ENCODE measurements at regions of chr1 and their contacts with region 1.

Region 1: DNA sequence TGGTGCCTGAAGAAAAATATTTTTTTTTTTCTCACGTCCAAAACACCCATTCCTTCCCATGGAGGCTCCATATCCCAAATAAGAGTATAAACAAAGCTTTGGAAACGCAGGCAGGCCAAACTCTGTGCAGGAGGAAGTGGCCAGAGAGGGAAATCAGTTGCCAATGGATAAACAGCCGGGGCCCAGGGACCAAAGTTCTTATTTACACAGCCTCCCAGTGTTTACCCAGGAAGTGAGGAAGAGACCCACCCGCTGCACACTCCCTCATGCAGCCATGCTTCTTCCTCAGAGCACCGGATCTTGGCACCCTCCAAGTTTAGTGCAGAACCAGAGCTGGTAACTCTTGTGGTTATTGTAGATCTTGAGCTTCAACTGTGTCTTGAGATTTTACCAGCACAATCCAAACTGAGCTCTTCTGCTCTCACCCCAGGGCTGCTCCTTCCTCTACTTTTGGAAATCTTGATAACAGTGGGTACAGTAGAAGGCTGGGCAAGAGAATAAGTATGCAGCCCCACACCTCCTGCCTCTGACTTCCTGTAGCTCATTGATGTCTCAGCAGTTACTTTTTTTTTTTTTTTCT is 14.2 kb downstream of the MARCKSL1 start:
- DNase-seq: no peak
- ATAC-seq: peak; percentile 9; the same call in 1 of the 3 replicates
- H3K4me3 ChIP-seq: no peak overlapping the region
- H3K27ac ChIP-seq: peak overlapping the region; percentile 69
- H3K4me1 ChIP-seq: peaks cover 54% of the 10 kb centered on the region
- H3K27me3 ChIP-seq: no peaks in the 10 kb centered on the region
- CTCF ChIP-seq: no peak
- EP300 ChIP-seq: no peak
- POLR2A ChIP-seq: no peak
- RAD21 ChIP-seq: no peak

Region 2: GRCh38 chr1:32221980-32222755 is 99.6 kb before region 1 on chr1 and contains the starts of genes EIF3I and TMEM234:
- CTCF ChIA-PET with region 1: interaction called, 99 read pairs
- POLR2A ChIA-PET with region 1: interaction called, 12 read pairs
- RAD21 ChIA-PET with region 1: interaction called, 49 read pairs
- SMC1A ChIA-PET with region 1: interaction called, 37 read pairs
- in situ Hi-C with region 1: no loop called
- intact Hi-C with region 1: no loop called
- DNase-seq: peak; percentile 60
- ATAC-seq: peak; percentile 91
- H3K4me3 ChIP-seq: peak within 1 kb of the TSS; percentile 89
- H3K27ac ChIP-seq: peak within 1 kb of the TSS; percentile 98
- H3K4me1 ChIP-seq: peaks cover 12% of the 10 kb centered on the region
- H3K27me3 ChIP-seq: no peaks in the 10 kb centered on the region
- CTCF ChIP-seq: no peak
- EP300 ChIP-seq: no peak
- POLR2A ChIP-seq: peak; percentile 90
- RAD21 ChIP-seq: no peak
- polyA plus RNA-seq, gene EIF3I: 572 to 606 TPM
- polyA plus RNA-seq, gene TMEM234: 2.9 to 4.5 TPM

Region 3: DNA sequence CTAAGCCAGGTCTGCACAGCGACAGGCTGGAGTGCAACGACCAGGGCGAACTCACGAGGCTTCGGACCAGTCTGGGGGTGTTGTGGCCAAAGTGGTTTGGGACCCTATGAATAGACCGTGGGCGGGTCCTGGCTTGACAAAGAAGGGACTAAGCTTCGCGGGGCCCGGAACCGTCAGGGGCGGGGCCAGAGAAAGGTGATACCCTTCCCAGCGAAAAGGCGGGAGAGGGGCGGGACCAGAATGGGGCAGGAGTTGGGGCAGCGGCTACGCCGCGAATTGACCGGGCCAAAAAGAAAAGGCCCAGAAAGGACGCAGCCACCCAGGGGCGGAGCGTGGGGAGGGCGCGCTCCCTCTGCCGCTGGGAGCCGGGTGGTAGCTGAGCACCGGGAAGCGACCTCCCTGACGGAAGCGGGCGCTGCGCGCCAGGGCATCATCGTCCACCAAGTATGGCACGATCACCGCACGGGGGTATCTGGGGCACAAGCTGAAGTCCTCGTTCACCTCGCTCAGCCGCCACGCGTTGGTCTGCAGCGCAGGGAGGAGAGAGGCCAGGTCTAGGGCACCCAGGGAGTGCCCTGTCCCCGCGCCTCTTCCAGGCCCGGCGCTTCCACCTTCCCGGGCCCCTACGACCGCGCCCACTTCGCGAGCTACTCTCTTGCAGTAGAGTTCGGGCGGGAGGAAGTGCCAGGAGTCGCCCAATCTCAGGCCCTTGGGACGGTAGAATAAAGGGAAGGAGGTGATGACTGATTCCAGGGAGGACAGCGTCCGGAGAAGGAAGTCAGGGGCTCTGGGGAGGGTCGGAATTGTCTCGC is 81.5 kb before region 1 on chr1:
- CTCF ChIA-PET with region 1: interaction called, 58 read pairs
- POLR2A ChIA-PET with region 1: interaction called, 4 read pairs
- RAD21 ChIA-PET with region 1: interaction called, 5 read pairs
- SMC1A ChIA-PET with region 1: interaction called, 22 read pairs
- in situ Hi-C with region 1: no loop called
- intact Hi-C with region 1: no loop called
- DNase-seq: no peak
- ATAC-seq: peak; percentile 81
- H3K4me3 ChIP-seq: peak overlapping the region; percentile 72
- H3K27ac ChIP-seq: peak overlapping the region; percentile 13; the same call in 1 of the 2 replicates
- H3K4me1 ChIP-seq: peaks cover 21% of the 10 kb centered on the region
- H3K27me3 ChIP-seq: no peaks in the 10 kb centered on the region
- CTCF ChIP-seq: peak in 2 of 3 experiments; percentile 27 to 46; a peak in 3 of 6 replicates
- EP300 ChIP-seq: no peak
- POLR2A ChIP-seq: no peak; the same call in 1 of the 2 replicates
- RAD21 ChIP-seq: no peak

Region 4: GRCh38 chr1:32255072-32256071 is 66.4 kb before region 1 on chr1:
- CTCF ChIA-PET with region 1: interaction called, 58 read pairs
- POLR2A ChIA-PET with region 1: interaction called, 21 read pairs
- RAD21 ChIA-PET with region 1: interaction called, 29 read pairs
- SMC1A ChIA-PET with region 1: interaction called, 124 read pairs
- in situ Hi-C with region 1: no loop called
- intact Hi-C with region 1: loop called (anchors 5 kb)
- DNase-seq: no peak
- ATAC-seq: peak; percentile 1; the same call in 2 of the 3 replicates
- H3K4me3 ChIP-seq: peak overlapping the region; percentile 33; the same call in 1 of the 2 replicates
- H3K27ac ChIP-seq: peak overlapping the region; percentile 89
- H3K4me1 ChIP-seq: peaks cover 66% of the 10 kb centered on the region
- H3K27me3 ChIP-seq: no peaks in the 10 kb centered on the region
- CTCF ChIP-seq: no peak
- EP300 ChIP-seq: no peak
- POLR2A ChIP-seq: no peak
- RAD21 ChIP-seq: no peak

Region 5: DNA sequence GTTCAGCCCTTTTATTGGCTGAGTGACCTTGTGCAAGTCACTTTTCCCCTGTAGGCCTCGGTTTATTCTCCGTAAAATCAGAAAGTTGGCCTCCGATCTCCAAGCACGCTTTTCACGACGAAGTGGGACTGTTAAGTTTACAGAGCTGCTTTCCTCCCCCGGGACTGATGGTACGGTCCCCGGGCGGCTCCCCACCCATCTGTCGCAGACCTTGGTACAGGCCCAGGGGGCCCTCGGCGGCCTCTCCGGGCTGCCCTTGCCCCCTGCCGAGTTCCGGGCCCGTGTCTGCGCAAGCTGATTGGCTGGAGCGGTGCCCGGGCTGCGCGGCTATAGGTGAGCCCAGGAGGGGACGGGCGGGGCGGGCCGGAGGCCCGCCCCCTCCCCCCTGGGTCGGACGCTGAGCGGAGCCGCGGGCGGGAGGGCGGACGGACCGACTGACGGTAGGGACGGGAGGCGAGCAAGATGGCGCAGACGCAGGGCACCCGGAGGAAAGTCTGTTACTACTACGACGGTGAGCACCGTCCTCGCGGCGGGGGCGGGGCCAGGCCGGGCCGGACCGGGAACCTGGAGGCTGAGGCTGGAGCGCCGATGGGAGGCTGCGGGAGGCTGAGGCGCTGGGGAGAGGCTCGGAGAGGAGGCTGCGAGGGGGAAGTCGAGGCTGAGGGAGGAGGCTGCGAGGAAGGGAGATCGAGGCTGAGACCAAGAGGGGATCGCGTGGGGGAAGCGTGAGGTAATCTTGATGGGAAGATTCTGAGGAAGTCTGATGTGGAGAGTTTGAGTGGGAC is 29.9 kb before region 1 on chr1 and contains the start of gene HDAC1:
- CTCF ChIA-PET with region 1: interaction called, 7 read pairs
- POLR2A ChIA-PET with region 1: interaction called, 8 read pairs
- RAD21 ChIA-PET with region 1: interaction called, 9 read pairs
- SMC1A ChIA-PET with region 1: interaction called, 18 read pairs
- in situ Hi-C with region 1: no loop called
- intact Hi-C with region 1: no loop called
- DNase-seq: peak; percentile 83
- ATAC-seq: peak; percentile 99
- H3K4me3 ChIP-seq: peak within 1 kb of the TSS; percentile 100
- H3K27ac ChIP-seq: peak within 1 kb of the TSS; percentile 92
- H3K4me1 ChIP-seq: peaks cover 3% of the 10 kb centered on the region; the same call in 1 of the 2 replicates
- H3K27me3 ChIP-seq: no peaks in the 10 kb centered on the region
- CTCF ChIP-seq: no peak
- EP300 ChIP-seq: peak in 1 of 2 experiments; percentile 34; a peak in 1 of 4 replicates
- POLR2A ChIP-seq: peak; percentile 94
- RAD21 ChIP-seq: no peak
- polyA plus RNA-seq, gene HDAC1: 150 to 151 TPM

Region 6: GRCh38 chr1:32307323-32307722 is 14.5 kb before region 1 on chr1:
- CTCF ChIA-PET with region 1: interaction called, 16 read pairs
- POLR2A ChIA-PET with region 1: interaction called, 13 read pairs
- RAD21 ChIA-PET with region 1: interaction called, 5 read pairs
- SMC1A ChIA-PET with region 1: interaction called, 11 read pairs
- in situ Hi-C with region 1: no loop called
- intact Hi-C with region 1: no loop called
- DNase-seq: no peak
- ATAC-seq: no peak
- H3K4me3 ChIP-seq: no peak overlapping the region
- H3K27ac ChIP-seq: 0 out of 2 replicates have a peak overlapping the region, but pooled peaks have one; percentile 8
- H3K4me1 ChIP-seq: peaks cover 14% of the 10 kb centered on the region
- H3K27me3 ChIP-seq: no peaks in the 10 kb centered on the region
- CTCF ChIP-seq: no peak
- EP300 ChIP-seq: no peak
- POLR2A ChIP-seq: no peak
- RAD21 ChIP-seq: no peak

Region 7: DNA sequence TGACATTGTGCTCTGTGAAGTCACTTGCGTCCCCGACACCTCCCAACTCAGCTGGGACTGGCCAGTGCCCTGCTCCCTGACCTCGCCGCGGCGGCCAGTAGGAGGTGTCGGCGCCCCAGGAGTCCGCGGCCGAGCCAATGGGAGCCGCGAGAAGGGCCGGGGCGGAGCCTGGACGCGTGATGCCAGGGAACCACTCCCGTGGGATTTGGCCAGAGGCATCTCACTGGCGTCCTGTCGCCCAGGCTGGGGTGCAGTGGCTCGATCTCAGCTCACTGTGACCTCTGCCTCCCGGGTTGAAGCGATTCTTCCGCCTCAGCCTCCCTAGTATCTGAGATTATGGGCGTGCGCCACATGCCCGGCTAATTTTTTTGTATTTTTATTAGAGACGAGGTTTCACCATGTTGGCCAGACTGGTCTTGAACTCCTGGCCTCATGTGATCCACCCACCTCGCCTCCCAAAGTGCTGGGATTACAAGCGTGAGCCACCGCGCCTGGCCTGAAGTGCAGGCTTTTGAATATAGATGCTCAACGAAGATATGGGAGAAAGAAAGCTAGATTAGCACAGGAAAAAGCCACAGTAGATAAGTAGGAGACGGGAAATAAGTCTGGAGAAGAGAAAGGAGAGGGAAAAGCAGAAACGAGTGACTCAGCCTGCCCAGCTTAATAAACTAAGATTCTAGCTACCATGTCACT is 290.5 kb after region 1 on chr1:
- CTCF ChIA-PET with region 1: no interaction called
- POLR2A ChIA-PET with region 1: no interaction called
- RAD21 ChIA-PET with region 1: no interaction called
- SMC1A ChIA-PET with region 1: no interaction called
- in situ Hi-C with region 1: no loop called
- intact Hi-C with region 1: no loop called
- DNase-seq: no peak
- ATAC-seq: peak; percentile 99
- H3K4me3 ChIP-seq: peak overlapping the region; percentile 67
- H3K27ac ChIP-seq: no peak overlapping the region; the same call in 1 of the 2 replicates
- H3K4me1 ChIP-seq: peaks cover 5% of the 10 kb centered on the region; the same call in 1 of the 2 replicates
- H3K27me3 ChIP-seq: no peaks in the 10 kb centered on the region
- CTCF ChIP-seq: peak; percentile 29 to 43 (median 38); a peak in 4 of 6 replicates
- EP300 ChIP-seq: no peak
- POLR2A ChIP-seq: peak; percentile 58
- RAD21 ChIP-seq: no peak

Measured in GM12878 (cell line).